GM12878 (cell line): ENCODE measurements at regions of chr3 and their contacts with region 1.

Region 1: DNA sequence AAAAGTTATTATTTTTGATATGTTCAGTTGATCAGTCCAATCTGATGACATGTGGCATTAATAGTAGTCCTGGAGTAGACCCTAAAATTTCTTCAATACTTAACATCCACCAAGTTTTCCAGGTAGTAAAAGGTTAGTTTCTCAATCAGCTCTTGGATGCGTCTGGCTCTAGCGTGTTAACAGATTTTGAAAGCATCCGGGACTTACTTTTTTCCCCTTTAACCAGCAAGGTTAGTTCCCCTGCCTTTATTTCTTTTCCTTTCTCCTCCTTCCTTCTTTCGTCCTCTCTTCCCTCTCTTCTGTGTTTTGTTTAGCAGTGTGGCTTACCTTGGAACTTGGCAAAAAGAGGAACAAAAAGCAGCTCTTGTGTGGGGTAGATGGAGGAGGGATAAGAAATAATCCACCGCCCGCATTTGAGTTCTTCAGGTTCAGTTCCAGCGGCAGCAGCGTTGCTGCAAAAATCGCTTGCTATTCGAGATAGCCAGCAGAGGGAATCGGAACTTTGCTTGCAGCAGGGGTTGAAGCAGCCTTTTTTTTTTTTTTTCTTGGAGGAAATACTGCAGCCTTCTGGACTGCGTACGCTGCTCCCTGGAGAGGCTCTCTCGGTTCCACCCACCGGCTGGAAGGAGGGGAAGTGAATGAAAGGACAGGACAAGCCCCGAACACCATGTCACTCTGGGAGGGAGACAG is at the start of gene RBMS3:
- DNase-seq: peak; percentile 45
- ATAC-seq: peak; percentile 18
- H3K4me3 ChIP-seq: peak within 1 kb of the TSS; percentile 79
- H3K27ac ChIP-seq: peak within 1 kb of the TSS; percentile 59
- H3K4me1 ChIP-seq: peaks cover 4% of the 10 kb centered on the region
- H3K27me3 ChIP-seq: no peaks in the 10 kb centered on the region
- CTCF ChIP-seq: peak; percentile 28 to 39 (median 35); a peak in 4 of 6 replicates
- EP300 ChIP-seq: no peak
- POLR2A ChIP-seq: no peak
- RAD21 ChIP-seq: peak; percentile 62
- polyA plus RNA-seq, gene RBMS3: 1.3 to 4.3 TPM

Region 2: GRCh38 chr3:28989646-28990089 is 290.9 kb before region 1 on chr3:
- CTCF ChIA-PET with region 1: no interaction called
- POLR2A ChIA-PET with region 1: no interaction called
- RAD21 ChIA-PET with region 1: no interaction called
- SMC1A ChIA-PET with region 1: no interaction called
- in situ Hi-C with region 1: no loop called
- intact Hi-C with region 1: loop called (anchors 10 kb)
- DNase-seq: peak; percentile 32
- ATAC-seq: peak; percentile 95
- H3K4me3 ChIP-seq: no peak overlapping the region
- H3K27ac ChIP-seq: no peak overlapping the region
- H3K4me1 ChIP-seq: peaks cover 13% of the 10 kb centered on the region; the same call in 1 of the 2 replicates
- H3K27me3 ChIP-seq: no peaks in the 10 kb centered on the region
- CTCF ChIP-seq: no peak
- EP300 ChIP-seq: peak in 1 of 2 experiments; percentile 28; a peak in 1 of 4 replicates
- POLR2A ChIP-seq: no peak
- RAD21 ChIP-seq: no peak

Region 3: DNA sequence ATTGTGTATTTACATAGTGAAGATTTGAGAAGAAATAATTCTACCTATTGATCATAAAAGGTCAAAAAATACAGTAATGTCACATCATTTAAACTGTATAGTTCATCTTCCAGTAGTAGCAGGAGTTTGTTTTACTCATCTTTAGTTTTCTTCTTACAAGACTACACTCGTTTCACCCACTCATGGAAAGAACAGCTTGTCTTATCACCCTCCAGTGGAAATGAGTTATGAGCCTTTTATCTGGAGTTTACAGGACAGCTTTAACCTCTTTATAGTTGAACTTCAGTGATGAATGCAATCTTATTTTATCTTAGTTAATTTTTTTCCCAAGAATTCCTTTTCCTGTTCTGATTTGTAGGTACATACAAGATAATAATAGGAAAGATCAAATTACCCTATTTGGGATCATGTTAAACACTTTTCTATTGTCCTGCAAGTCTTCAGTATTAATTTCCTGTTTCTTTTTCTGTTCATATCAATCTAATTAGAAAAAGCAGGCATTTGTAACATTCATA is 37.2 kb after region 1 on chr3:
- CTCF ChIA-PET with region 1: interaction called, 5 read pairs
- POLR2A ChIA-PET with region 1: interaction called, 4 read pairs
- RAD21 ChIA-PET with region 1: interaction called, 12 read pairs
- SMC1A ChIA-PET with region 1: interaction called, 307 read pairs
- in situ Hi-C with region 1: no loop called
- intact Hi-C with region 1: loop called (anchors 2 kb)
- DNase-seq: no peak
- ATAC-seq: no peak
- H3K4me3 ChIP-seq: no peak overlapping the region
- H3K27ac ChIP-seq: no peak overlapping the region
- H3K4me1 ChIP-seq: peaks cover 5% of the 10 kb centered on the region; the same call in 1 of the 2 replicates
- H3K27me3 ChIP-seq: no peaks in the 10 kb centered on the region
- CTCF ChIP-seq: no peak
- EP300 ChIP-seq: no peak
- POLR2A ChIP-seq: no peak
- RAD21 ChIP-seq: no peak

Region 4: DNA sequence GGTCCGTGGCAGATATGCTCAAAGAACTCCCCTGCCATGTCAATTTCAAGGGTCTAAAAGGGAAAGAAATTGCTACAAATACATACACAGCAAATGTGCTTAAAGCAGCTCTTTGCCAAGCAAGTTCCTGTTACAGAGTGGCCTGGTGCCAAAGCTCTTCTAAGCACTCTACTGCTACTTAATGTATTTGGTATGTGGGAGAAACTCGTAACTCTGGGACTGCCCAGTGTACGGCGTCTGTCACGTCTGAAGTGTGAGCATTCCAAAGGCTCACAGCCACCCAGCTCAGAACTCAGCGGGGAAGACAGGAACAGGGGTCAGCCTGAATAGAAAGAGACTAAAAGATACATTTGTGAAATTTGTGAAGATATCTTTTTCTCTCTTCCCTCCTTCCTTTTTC is 54.9 kb after region 1 on chr3:
- CTCF ChIA-PET with region 1: interaction called, 6 read pairs
- POLR2A ChIA-PET with region 1: interaction called, 7 read pairs
- RAD21 ChIA-PET with region 1: interaction called, 17 read pairs
- SMC1A ChIA-PET with region 1: interaction called, 307 read pairs
- in situ Hi-C with region 1: no loop called
- intact Hi-C with region 1: no loop called
- DNase-seq: no peak
- ATAC-seq: peak; percentile 47
- H3K4me3 ChIP-seq: no peak overlapping the region
- H3K27ac ChIP-seq: no peak overlapping the region
- H3K4me1 ChIP-seq: no peaks in the 10 kb centered on the region
- H3K27me3 ChIP-seq: no peaks in the 10 kb centered on the region
- CTCF ChIP-seq: no peak
- EP300 ChIP-seq: no peak
- POLR2A ChIP-seq: no peak
- RAD21 ChIP-seq: no peak

Region 5: GRCh38 chr3:29686889-29687592 is 406.5 kb after region 1 on chr3:
- CTCF ChIA-PET with region 1: interaction called, 4 read pairs
- POLR2A ChIA-PET with region 1: no interaction called
- RAD21 ChIA-PET with region 1: no interaction called
- SMC1A ChIA-PET with region 1: interaction called, 4 read pairs
- in situ Hi-C with region 1: no loop called
- intact Hi-C with region 1: loop called (anchors 5 kb)
- DNase-seq: peak; percentile 70
- ATAC-seq: peak; percentile 92
- H3K4me3 ChIP-seq: no peak overlapping the region
- H3K27ac ChIP-seq: no peak overlapping the region
- H3K4me1 ChIP-seq: peaks cover 5% of the 10 kb centered on the region
- H3K27me3 ChIP-seq: no peaks in the 10 kb centered on the region
- CTCF ChIP-seq: no peak
- EP300 ChIP-seq: peak; percentile 38 to 71; a peak in 2 of 4 replicates
- POLR2A ChIP-seq: no peak
- RAD21 ChIP-seq: no peak